Posterior vena cava (tissue), 2 donors: ENCODE measurements at regions of chr6 and their contacts with region 1.

Region 1: GRCh38 chr6:92201618-92202017 is 1217.7 kb downstream of the EPHA7 start:
- DNase-seq: no peak

Region 2: DNA sequence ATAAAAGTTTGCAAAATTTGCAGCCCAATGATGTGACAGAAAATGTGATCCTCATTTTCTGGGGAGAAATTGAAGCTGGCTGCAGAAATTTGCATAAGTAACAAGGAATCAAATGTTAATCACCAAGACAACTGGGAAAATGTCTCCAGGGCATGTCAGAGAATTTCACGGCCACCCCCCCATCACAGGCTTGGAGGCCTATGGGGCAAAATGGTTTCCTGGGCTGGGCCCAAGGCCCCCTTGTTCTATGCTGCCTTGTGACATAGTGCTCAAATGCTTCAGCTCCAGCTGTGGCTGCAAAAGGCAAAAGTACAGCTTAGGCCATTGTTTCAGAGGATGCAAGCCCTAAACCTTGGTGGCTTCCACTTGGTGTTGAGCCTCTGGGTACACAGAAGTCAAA is 15.1 kb after region 1 on chr6:
- intact Hi-C with region 1: loop called in 1 of 2 experiments (anchors 1 kb)
- DNase-seq: no peak

Region 3: GRCh38 chr6:92415649-92416048 is 214.0 kb after region 1 on chr6:
- intact Hi-C with region 1: no loop called
- DNase-seq: no peak